HEK293T (cell line): ENCODE measurements at regions of chr1 and their contacts with region 1.

Region 1: DNA sequence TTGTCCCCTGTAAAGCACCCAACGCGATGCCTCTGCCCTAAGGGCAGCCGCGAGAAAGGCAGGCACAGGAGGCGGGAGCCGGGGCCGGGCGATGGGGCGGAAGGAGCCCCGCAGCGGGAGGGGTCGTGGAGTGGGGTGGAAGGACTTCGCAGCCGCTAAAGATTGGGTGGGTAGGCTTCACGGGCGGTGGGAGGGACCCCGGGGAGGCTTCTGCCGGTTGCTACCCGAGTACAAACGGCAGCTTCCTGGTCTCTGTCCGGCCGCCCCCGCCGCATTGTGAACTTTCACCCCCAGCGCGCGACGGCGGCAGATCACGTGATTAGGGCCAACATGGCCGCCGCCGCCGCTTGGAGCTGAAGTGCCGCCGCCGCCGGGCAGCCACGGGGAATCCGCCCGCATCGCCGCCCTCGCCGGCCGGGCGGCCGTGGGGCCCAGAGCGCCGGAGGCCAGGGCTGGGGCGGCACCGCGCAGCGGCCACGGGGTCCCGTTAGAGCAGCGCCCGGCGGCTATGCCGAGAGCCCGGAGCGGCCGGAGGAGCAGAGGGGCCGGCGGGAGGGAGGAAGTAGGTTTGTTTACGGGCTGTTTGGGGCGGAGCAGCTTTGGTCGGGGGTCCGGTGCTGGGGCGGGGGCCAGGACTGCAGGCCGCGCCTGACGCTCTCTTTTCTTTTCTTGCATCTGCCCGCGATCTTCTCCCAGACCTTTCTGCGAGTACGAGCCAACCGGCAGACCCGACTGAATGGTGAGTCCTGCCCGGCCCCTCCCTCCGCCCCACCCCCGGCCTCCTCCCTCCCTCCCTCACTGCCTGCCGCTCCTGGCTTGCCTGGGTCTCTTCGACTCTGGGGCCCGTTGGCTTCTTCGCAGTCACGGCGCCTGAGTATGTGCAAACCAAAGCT is 42.4 kb downstream of the TMEM53 start:
- DNase-seq: peak; percentile 91

Region 2: DNA sequence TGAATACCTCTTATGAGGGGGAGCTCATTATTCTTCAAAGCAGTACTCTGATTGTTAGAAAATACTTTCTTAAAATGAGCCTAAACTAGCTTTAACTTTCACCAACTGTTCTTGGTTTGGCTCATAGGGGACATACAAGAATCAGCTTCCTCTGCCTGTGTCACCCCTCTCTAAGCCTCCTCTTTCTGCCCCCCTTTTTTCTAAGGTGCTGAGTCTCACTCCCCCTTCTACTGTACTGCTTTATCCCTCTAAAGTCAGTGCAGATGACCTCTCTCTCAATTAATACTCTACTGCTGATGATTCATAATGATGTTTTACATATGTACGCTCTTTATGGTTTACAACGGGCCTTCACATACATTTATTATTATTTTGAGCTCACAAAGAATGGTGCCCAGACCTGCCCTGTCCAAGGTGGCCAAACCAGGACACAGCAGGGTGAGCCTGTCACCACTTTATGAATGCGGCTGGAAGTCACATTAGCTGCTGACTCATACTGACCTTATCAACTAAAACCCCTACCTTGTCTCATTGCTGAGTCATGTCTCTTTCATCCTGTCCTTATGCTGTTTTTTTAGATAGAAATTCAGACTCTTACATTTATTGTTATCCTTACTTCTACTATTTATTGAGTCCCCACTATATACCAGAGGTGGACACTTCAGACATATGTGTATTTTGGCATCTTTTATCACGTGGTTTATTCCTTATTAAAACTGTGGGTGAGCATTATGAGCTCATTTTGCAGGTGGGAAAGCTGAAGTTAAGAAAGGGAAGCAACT is 99.9 kb before region 1 on chr1:
- CTCF ChIA-PET with region 1: no interaction called
- POLR2A ChIA-PET with region 1: no interaction called
- DNase-seq: no peak

Region 3: GRCh38 chr1:44609412-44609767 is 22.5 kb before region 1 on chr1:
- CTCF ChIA-PET with region 1: interaction called, 7 read pairs
- POLR2A ChIA-PET with region 1: interaction called, 111 read pairs
- DNase-seq: peak; percentile 56

Region 4: GRCh38 chr1:44616991-44617702 is 14.7 kb before region 1 on chr1:
- CTCF ChIA-PET with region 1: no interaction called
- POLR2A ChIA-PET with region 1: interaction called, 111 read pairs
- DNase-seq: no peak

Region 5: GRCh38 chr1:44645476-44646244 is 13.8 kb after region 1 on chr1:
- CTCF ChIA-PET with region 1: interaction called, 3 read pairs
- POLR2A ChIA-PET with region 1: interaction called, 54 read pairs
- DNase-seq: no peak

Region 6: GRCh38 chr1:44652445-44653106 is 20.7 kb after region 1 on chr1:
- CTCF ChIA-PET with region 1: interaction called, 12 read pairs
- POLR2A ChIA-PET with region 1: interaction called, 53 read pairs
- DNase-seq: peak; percentile 86

Region 7: GRCh38 chr1:44674113-44675000 is 42.5 kb after region 1 on chr1 and contains the starts of genes ARMH1 and TMEM53:
- CTCF ChIA-PET with region 1: no interaction called
- POLR2A ChIA-PET with region 1: interaction called, 10 read pairs
- DNase-seq: peak; percentile 97